ENCODE measurements at regions of chr2 and their contacts with region 1.

Region 1: GRCh38 chr2:175154661-175155082 is 13.3 kb downstream of the ATF2 start:
- DNase-seq: no peak
- CTCF ChIP-seq: no peak

Region 2: GRCh38 chr2:174974131-174974530 is 180.5 kb before region 1 on chr2:
- CTCF ChIA-PET with region 1: no interaction called
- POLR2A ChIA-PET with region 1: no interaction called
- DNase-seq: no peak
- CTCF ChIP-seq: no peak

Region 3: GRCh38 chr2:175123254-175123653 is 31.4 kb before region 1 on chr2:
- CTCF ChIA-PET with region 1: no interaction called
- POLR2A ChIA-PET with region 1: interaction called, 11 read pairs
- DNase-seq: no peak
- CTCF ChIP-seq: no peak

Region 4: DNA sequence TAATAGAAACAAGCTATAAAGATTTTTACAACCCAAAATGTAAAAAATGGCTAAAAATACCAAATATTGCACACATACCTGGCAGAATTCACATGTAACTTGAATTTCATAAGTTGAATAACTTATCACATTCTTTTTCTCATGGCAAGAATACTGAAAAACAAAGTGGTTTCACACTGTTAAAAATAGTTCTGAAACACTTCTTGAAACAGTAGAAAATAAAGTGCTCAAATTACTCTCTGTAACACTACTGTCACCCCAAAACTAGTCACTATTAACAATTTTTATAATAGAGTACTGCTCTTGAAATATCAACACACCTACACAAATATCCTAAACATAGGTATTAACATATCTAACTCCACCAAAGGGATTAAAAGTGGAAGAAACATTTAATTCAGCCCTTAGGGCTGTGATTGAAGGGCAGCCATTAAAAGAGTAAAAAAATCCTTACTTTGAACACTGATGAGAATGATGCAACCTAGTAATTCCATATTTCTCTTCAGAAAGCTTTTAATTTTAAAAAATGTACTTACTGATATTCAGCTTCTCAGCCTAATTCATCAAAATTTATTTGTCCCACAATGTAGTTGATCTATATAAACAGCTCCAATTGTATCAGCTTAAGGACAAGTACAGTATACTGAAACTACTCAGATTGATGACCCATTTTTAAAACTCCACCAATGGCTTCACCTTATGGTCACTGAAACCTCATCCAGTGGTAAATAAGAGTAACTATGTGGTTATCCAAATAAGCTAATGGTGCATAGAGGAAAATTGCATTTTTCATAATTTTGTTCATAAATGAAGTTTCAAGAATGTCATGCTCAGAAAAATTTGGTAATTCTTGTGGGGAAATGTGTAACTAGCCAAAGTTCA is 18.1 kb before region 1 on chr2:
- CTCF ChIA-PET with region 1: interaction called, 42 read pairs
- POLR2A ChIA-PET with region 1: interaction called, 5 read pairs
- DNase-seq: no peak
- CTCF ChIP-seq: no peak